Lower lobe of right lung (tissue), 2 donors: ENCODE measurements at regions of chr9 and their contacts with region 1.

Region 1: DNA sequence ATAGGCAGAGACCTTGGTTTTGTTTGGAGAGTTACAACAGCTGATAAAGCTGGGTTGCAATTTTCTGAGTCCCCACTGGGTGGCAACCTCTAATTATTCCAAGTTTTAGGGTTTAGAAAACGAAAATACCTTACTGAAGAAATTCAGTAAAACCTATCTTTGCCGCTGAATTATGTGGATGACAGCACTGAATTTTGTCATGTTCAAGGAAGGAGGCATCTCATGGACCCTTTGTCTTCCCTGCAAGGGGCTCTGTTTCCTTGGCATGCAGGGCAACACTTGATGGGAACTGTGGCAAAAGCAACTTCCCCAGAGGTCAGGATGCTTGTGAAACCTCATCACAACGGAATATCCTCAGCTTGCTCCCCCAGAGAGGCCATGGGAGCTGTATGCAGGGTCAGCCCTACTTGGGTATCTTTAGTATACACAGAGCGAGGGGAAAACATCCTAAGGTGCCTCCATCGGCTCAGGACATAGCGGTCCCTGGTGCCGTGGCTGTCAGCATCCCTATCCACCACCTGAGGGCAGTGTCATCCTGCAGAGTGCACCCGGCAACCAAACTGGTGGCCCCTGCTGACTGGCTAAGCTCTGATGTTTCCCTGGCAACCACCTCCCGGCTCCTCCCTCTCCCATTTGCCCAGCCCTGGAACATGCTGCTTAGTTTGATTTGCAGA is 123.1 kb downstream of the RXRA start:
- DNase-seq: peak; percentile 93
- ATAC-seq: peak; percentile 97 to 98
- H3K4me3 ChIP-seq: no peak overlapping the region
- H3K27ac ChIP-seq: no peak overlapping the region
- H3K4me1 ChIP-seq: no peaks in the 10 kb centered on the region
- H3K27me3 ChIP-seq: no peaks in the 10 kb centered on the region
- CTCF ChIP-seq: peak; percentile 90

Region 2: DNA sequence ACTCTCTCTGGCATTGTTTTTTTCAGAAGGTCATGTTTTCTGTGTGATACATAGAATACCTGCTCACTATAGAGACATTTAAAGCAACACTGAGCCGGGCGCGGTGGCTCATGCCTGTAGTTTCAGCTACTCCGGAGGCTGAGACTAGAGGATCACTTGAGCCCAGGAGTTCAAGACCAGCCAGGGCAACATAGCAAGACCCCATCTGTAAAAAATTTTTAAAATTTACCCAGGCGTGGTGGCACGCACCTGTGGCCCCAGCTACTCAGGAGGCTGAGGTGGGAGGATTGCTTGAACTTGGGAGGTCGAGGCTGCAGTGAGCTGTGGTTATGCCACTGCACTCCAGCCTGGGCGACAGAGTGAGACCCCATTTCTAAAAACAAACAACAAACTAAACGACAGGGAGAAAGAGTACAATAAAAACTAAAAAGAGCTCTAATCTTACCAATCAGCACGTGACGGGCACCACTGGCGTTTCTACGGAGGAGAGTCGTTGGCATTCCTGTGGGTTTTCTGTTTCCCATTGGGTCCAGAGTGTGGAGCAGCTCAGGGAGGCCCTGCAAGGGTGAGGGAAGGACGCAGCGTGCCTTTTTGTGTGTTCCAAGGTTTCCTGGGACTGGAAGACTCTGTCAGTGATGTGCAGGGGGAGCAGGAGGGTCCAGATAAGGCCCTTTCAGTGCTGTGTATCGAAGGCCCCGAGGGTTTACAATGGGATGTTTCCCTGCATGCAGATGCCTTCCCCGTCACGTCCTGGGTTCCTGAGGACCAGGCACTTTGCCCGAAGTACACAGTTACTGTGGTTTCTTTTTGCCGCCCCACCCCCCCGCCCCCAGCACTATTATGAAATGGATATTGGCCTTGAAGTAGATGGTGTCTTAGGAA is 277.8 kb before region 1 on chr9:
- intact Hi-C with region 1: loop called (anchors 5 kb)
- DNase-seq: no peak
- ATAC-seq: peak; percentile 44 to 45
- H3K4me3 ChIP-seq: no peak overlapping the region
- H3K27ac ChIP-seq: peak overlapping the region; percentile 58
- H3K4me1 ChIP-seq: peaks cover 27% of the 10 kb centered on the region
- H3K27me3 ChIP-seq: peaks cover 7% of the 10 kb centered on the region
- CTCF ChIP-seq: no peak

Region 3: DNA sequence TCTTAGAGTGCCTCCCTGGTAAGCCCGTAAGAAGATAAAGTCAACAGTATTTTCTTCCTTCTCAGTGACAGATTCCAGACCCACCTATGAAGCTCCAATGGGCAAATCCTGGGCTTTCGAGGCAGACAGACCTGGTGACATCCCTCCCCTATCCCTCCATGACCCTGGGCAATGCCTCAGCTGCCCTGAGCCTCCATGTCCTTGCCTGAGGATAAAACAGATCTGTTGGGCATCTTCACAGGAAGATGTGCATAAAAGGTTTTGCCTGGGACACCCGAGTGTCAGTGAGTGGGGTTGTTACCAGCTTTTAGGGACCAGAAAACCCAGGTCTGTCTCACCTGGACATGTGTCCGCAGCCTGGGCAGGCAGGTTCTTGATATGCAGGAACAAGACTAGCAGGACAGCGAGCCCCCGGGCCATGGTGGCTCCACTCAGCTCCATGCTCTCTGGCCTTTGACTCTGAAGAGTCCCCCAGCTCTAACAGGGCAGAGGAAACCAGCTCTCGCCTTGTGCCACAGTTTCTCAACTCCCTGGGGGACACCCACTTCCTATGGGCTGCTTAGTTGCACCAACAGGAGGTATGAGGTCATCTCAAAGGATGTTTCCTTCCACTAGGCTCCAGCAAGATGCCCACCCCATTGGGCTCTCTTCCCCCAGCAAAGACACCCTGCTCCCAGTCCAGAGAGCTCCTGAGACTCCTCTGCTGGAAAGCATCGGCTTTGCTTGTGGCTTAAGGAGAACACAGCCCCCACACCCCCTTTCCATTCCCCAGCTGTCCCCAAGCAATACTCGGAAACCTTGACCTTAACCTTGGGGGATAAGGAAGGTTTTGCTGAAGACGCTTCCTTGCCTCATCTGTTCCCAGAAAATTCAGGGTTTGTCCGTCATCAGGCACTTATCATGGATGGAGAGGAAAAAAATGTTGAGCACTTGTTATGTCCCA is 468.3 kb after region 1 on chr9 and contains the start of gene FCN1:
- intact Hi-C with region 1: no loop called
- DNase-seq: peak; percentile 50
- ATAC-seq: peak; percentile 51 to 61
- H3K4me3 ChIP-seq: peak within 1 kb of the TSS; percentile 30
- H3K27ac ChIP-seq: no peak within 1 kb of the TSS
- H3K4me1 ChIP-seq: peaks cover 7% of the 10 kb centered on the region
- H3K27me3 ChIP-seq: peaks cover 19% of the 10 kb centered on the region
- CTCF ChIP-seq: no peak
- total RNA-seq, gene FCN1: 84.4 TPM